Panc1 (cell line): ENCODE measurements at regions of chr7 and their contacts with region 1.

Region 1: DNA sequence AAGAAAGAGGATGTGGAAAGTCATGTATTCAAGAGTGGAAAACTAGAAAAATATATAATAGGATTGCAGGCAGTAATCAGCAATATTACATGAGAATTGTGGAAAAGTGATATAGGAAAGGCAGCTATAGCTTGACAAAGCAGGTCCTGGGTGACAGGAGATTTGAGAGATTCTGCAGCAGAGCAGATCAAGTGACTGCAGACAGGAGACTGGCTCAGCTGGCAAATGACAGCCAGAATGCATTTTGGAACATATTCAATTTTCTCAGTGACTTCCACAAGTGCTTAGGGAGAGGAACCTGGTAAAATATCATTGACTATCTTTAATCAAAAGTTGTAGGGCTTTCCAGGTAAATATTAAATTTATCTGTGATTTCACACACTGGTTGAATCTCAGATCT is 260.5 kb upstream of the CACNA2D1 start:
- DNase-seq: no peak
- ATAC-seq: no peak
- H3K4me3 ChIP-seq: no peak overlapping the region
- H3K27ac ChIP-seq: no peak overlapping the region
- H3K4me1 ChIP-seq: peaks cover 11% of the 10 kb centered on the region
- H3K27me3 ChIP-seq: no peaks in the 10 kb centered on the region
- CTCF ChIP-seq: no peak

Region 2: GRCh38 chr7:81744389-81744788 is 959.7 kb before region 1 on chr7:
- CTCF ChIA-PET with region 1: no interaction called
- POLR2A ChIA-PET with region 1: interaction called, 11 read pairs
- in situ Hi-C with region 1: no loop called
- intact Hi-C with region 1: no loop called
- DNase-seq: no peak
- ATAC-seq: no peak
- H3K4me3 ChIP-seq: no peak overlapping the region
- H3K27ac ChIP-seq: no peak overlapping the region
- H3K4me1 ChIP-seq: no peaks in the 10 kb centered on the region
- H3K27me3 ChIP-seq: no peaks in the 10 kb centered on the region
- CTCF ChIP-seq: no peak

Region 3: DNA sequence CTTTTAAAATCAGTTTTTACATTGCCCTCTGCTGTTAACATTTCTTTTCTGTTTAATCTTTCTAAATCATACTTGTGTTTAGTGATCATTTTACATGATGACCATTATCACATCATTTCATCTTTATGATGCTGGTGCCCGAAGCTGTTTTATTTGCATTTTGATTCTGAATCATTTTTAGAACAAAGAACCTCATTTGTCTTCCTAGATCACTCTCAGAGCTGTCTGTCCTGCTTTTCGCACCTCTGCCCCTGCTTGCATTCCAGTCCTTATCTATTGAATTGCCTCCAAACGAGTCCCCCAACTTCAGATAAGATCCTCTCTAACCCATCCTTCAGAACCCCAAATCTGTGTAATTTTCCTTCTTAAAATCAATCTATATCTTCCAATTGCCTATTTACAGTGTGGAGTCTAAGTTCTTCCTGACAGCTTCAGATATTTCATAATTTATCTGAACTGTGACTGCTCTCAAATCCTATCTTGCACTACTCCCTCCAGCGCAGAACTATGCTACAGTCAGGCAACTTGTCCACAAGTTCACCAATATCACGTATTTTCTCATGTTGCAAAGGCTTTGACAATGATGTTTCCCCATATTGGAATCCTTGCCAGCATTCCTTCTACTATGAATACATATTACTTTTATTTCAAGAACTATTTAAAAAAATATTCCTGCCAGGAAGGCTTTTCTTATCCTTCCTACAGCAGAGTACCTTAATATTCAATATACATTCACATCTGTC is 85.9 kb after region 1 on chr7:
- CTCF ChIA-PET with region 1: no interaction called
- POLR2A ChIA-PET with region 1: no interaction called
- in situ Hi-C with region 1: no loop called
- intact Hi-C with region 1: no loop called
- DNase-seq: no peak
- ATAC-seq: peak; percentile 68
- H3K4me3 ChIP-seq: no peak overlapping the region
- H3K27ac ChIP-seq: no peak overlapping the region
- H3K4me1 ChIP-seq: peaks cover 4% of the 10 kb centered on the region; the same call in 1 of the 2 replicates
- H3K27me3 ChIP-seq: no peaks in the 10 kb centered on the region
- CTCF ChIP-seq: no peak